MCF 10A (cell line): ENCODE measurements at regions of chr2 and their contacts with region 1.

Region 1: GRCh38 chr2:165794536-165794928 is 485 bp upstream of the GALNT3 start:
- DNase-seq: peak; percentile 81
- H3K4me3 Mint-ChIP-seq: peak overlapping the region; percentile 87
- H3K27ac Mint-ChIP-seq: peak overlapping the region; percentile 39
- H3K4me1 Mint-ChIP-seq: peaks cover 10% of the 10 kb centered on the region
- H3K27me3 Mint-ChIP-seq: no peaks in the 10 kb centered on the region
- CTCF ChIP-seq: no peak

Region 2: GRCh38 chr2:165601928-165602521 is 192.5 kb before region 1 on chr2:
- CTCF ChIA-PET with region 1: no interaction called
- POLR2A ChIA-PET with region 1: no interaction called
- intact Hi-C with region 1: no loop called
- DNase-seq: peak; percentile 69
- H3K4me3 Mint-ChIP-seq: no peak overlapping the region
- H3K27ac Mint-ChIP-seq: peak overlapping the region; percentile 4
- H3K4me1 Mint-ChIP-seq: peaks cover 7% of the 10 kb centered on the region
- H3K27me3 Mint-ChIP-seq: peaks cover 38% of the 10 kb centered on the region
- CTCF ChIP-seq: no peak

Region 3: GRCh38 chr2:165725421-165725820 is 69.1 kb before region 1 on chr2:
- CTCF ChIA-PET with region 1: no interaction called
- POLR2A ChIA-PET with region 1: interaction called, 3 read pairs
- intact Hi-C with region 1: loop called (anchors 1 kb)
- DNase-seq: peak; percentile 56
- H3K4me3 Mint-ChIP-seq: no peak overlapping the region
- H3K27ac Mint-ChIP-seq: no peak overlapping the region
- H3K4me1 Mint-ChIP-seq: peaks cover 11% of the 10 kb centered on the region
- H3K27me3 Mint-ChIP-seq: no peaks in the 10 kb centered on the region
- CTCF ChIP-seq: no peak

Region 4: GRCh38 chr2:165762723-165763122 is 31.8 kb before region 1 on chr2:
- CTCF ChIA-PET with region 1: interaction called, 3 read pairs
- POLR2A ChIA-PET with region 1: interaction called, 23 read pairs
- intact Hi-C with region 1: no loop called
- DNase-seq: peak; percentile 12
- H3K4me3 Mint-ChIP-seq: no peak overlapping the region
- H3K27ac Mint-ChIP-seq: peak overlapping the region; percentile 42
- H3K4me1 Mint-ChIP-seq: no peaks in the 10 kb centered on the region
- H3K27me3 Mint-ChIP-seq: no peaks in the 10 kb centered on the region
- CTCF ChIP-seq: no peak

Region 5: GRCh38 chr2:165778653-165779451 is 15.7 kb before region 1 on chr2:
- CTCF ChIA-PET with region 1: interaction called, 4 read pairs
- POLR2A ChIA-PET with region 1: interaction called, 15 read pairs
- intact Hi-C with region 1: no loop called
- DNase-seq: peak; percentile 18
- H3K4me3 Mint-ChIP-seq: no peak overlapping the region
- H3K27ac Mint-ChIP-seq: no peak overlapping the region
- H3K4me1 Mint-ChIP-seq: peaks cover 5% of the 10 kb centered on the region
- H3K27me3 Mint-ChIP-seq: no peaks in the 10 kb centered on the region
- CTCF ChIP-seq: no peak

Region 6: GRCh38 chr2:165889158-165889557 is 94.6 kb after region 1 on chr2:
- CTCF ChIA-PET with region 1: no interaction called
- POLR2A ChIA-PET with region 1: no interaction called
- intact Hi-C with region 1: no loop called
- DNase-seq: no peak
- H3K4me3 Mint-ChIP-seq: no peak overlapping the region
- H3K27ac Mint-ChIP-seq: no peak overlapping the region
- H3K4me1 Mint-ChIP-seq: no peaks in the 10 kb centered on the region
- H3K27me3 Mint-ChIP-seq: no peaks in the 10 kb centered on the region
- CTCF ChIP-seq: no peak

Region 7: DNA sequence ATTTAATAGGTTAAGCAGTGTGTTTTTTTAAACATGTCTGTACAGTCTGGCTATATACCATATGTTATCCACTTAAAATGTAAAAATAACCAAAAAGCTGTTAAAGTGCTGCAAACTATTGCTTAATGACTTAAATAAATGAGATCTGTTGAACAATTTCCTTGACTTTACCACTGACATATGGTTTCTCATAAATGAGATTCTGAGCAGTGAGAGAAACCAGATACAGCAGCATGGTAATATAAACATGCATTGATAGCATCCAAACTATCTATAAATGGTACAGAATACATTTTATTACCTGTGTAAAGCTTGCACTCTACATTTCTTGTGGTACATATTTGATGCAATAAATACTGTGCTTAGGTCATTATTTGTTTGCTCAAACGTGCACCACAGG is 195.3 kb after region 1 on chr2:
- CTCF ChIA-PET with region 1: no interaction called
- POLR2A ChIA-PET with region 1: no interaction called
- intact Hi-C with region 1: no loop called
- DNase-seq: no peak
- H3K4me3 Mint-ChIP-seq: no peak overlapping the region
- H3K27ac Mint-ChIP-seq: no peak overlapping the region
- H3K4me1 Mint-ChIP-seq: no peaks in the 10 kb centered on the region
- H3K27me3 Mint-ChIP-seq: peaks cover 75% of the 10 kb centered on the region
- CTCF ChIP-seq: no peak